Gastrocnemius medialis (tissue), 4 donors: ENCODE measurements at regions of chr12 and their contacts with region 1.

Region 1: DNA sequence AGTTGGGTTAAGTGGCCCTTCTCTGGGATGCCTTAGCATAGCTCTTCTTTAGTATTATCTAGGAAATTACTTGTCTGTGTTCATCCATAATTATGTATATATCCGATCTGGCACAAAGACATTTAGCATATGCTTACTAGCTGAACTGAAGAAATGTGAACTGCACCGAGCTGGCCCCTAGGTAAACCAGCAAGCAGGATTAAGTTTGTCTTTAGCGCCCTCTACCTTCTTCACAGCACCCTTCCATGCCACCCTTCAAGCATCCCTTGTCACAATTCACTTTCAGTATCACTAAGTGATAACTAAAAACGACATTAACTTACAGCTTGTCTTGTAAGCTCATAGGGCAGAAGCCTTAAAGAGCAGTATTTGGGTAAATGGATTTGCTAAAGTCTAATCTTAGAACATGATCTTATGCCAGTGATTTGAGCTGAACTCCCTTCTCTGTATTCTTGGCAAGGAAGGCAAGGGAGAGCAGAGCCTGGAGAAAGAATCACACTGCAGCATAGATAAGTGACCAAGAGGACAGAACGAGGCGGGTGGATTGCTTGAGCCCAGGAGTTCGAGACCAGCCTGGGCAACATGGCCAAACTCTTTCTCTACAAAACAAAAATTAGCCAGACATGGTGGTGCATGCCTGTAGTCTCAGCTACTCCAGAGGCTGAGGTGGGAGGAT is 2.6 kb upstream of the HAL start:
- DNase-seq: no peak
- ATAC-seq: peak; percentile 66 to 88
- H3K4me3 ChIP-seq: no peak overlapping the region
- H3K27ac ChIP-seq: no peak overlapping the region
- H3K4me1 ChIP-seq: no peaks in the 10 kb centered on the region
- H3K27me3 ChIP-seq: no peaks in the 10 kb centered on the region
- CTCF ChIP-seq: peak; percentile 18 to 70 (median 55)
- POLR2A ChIP-seq: no peak

Region 2: GRCh38 chr12:95790033-95790911 is 208.5 kb before region 1 on chr12 and contains the start of gene NTN4:
- in situ Hi-C with region 1: no loop called
- intact Hi-C with region 1: no loop called
- DNase-seq: no peak
- ATAC-seq: peak; percentile 33 to 42
- H3K4me3 ChIP-seq: peak within 1 kb of the TSS; percentile 65 to 75 (median 67)
- H3K27ac ChIP-seq: peak within 1 kb of the TSS; percentile 71 to 76 (median 74)
- H3K4me1 ChIP-seq: peaks cover 4 to 14% of the 10 kb centered on the region in 2 donors
- H3K27me3 ChIP-seq: peaks cover 0 to 27% (median 8%) of the 10 kb centered on the region in 3 donors
- CTCF ChIP-seq: no peak
- POLR2A ChIP-seq: peak in 1 of 2 donors; percentile 20
- total RNA-seq, gene NTN4: 4.0 to 10.0 (median 5.7) TPM

Region 3: DNA sequence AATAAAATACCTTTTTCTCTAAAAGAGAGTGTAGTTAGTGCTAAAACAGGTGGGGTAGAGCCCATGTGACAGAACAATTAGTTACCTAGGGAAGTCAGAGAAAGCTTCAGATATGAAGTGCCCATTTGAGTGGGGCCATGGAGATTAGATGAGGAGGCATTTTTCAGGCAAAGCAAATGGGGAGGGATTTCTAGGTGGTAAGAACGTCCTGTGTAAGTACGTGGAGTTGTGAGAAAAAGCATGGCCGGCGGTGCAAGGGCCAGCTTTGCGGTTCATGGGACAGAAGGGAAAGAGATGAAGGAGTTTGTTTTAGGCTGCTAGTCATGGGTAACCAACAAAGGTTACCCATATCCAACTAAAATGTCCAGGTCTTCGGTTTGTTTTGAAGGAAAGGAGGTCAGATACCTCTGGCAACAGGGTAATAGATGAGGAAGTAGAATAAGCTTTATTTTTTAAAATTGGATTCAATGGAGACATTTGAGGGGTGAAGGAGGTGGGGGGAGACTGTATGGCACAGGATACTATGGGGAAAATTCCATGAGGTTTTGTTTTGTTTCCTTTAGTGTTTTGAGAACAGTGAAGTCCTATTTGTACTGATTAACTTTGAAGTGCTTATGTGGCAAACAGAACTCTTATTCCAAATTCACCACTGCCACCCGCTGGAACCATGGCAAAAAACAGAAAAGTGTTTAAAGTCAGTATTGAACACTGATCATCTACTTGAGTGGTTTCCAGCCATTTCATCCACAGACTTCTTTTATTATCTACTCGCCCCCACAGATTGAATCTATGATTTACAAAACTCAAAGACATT is 150.0 kb before region 1 on chr12:
- in situ Hi-C with region 1: no loop called
- intact Hi-C with region 1: no loop called
- DNase-seq: no peak
- ATAC-seq: no peak
- H3K4me3 ChIP-seq: no peak overlapping the region
- H3K27ac ChIP-seq: no peak overlapping the region
- H3K4me1 ChIP-seq: no peaks in the 10 kb centered on the region
- H3K27me3 ChIP-seq: peaks cover 0 to 2% (median 0%) of the 10 kb centered on the region in 3 donors
- CTCF ChIP-seq: no peak
- POLR2A ChIP-seq: no peak

Region 4: DNA sequence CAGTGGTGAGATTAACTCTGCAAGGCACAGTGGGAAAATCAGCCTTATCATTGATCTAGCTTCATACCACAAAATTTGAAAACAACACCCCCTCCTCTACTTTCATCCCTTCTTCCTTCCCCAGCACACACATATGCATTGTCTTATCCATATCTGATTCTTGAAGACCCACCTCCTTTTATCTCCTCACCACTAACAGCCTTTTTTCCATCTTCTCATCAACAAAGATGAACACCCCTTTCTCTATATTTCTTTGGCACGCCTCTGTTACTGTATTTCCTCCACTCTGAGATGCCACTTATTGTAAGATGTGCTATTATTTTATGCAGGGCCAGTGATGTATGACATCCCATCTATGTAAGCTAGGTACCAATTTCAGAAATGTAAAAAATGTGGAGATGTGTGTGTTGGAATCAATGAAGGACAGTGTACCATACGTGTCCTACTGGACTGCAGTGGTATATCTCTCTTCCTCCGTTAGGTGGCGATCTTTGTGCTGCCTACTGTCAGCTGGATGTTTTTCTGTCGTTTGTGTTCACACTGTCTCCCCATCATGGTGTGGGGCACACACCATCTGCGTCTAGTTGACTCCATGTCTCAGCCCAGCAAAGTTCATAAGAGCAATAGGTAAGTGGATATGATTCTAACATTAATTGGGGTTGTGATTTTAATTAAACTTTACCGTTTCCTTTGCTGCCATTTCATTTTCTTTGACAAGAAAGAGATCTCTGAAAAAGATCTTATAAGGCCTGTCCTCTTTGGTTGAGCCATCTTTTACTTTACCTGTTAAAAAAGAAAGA is 80.4 kb before region 1 on chr12:
- in situ Hi-C with region 1: loop called in 2 of 4 experiments (anchors 10 kb)
- intact Hi-C with region 1: loop called (anchors 1 kb)
- DNase-seq: peak in 1 of 2 donors; percentile 15
- ATAC-seq: peak in 1 of 2 donors; percentile 47
- H3K4me3 ChIP-seq: no peak overlapping the region
- H3K27ac ChIP-seq: no peak overlapping the region
- H3K4me1 ChIP-seq: no peaks in the 10 kb centered on the region
- H3K27me3 ChIP-seq: no peaks in the 10 kb centered on the region
- CTCF ChIP-seq: peak; percentile 51 to 74 (median 63)
- POLR2A ChIP-seq: no peak